GM10248 (cell line): ENCODE measurements at regions of chr2 and their contacts with region 1.

Region 1: GRCh38 chr2:70142590-70143313 is 48.1 kb downstream of the C2orf42 start:
- DNase-seq: peak; percentile 97
- CTCF ChIP-seq: peak; percentile 95

Region 2: GRCh38 chr2:70086838-70087701 is 55.7 kb before region 1 on chr2 and contains the start of gene PCBP1:
- CTCF ChIA-PET with region 1: interaction called, 10 read pairs
- POLR2A ChIA-PET with region 1: interaction called, 4 read pairs
- DNase-seq: peak; percentile 93
- CTCF ChIP-seq: no peak

Region 3: DNA sequence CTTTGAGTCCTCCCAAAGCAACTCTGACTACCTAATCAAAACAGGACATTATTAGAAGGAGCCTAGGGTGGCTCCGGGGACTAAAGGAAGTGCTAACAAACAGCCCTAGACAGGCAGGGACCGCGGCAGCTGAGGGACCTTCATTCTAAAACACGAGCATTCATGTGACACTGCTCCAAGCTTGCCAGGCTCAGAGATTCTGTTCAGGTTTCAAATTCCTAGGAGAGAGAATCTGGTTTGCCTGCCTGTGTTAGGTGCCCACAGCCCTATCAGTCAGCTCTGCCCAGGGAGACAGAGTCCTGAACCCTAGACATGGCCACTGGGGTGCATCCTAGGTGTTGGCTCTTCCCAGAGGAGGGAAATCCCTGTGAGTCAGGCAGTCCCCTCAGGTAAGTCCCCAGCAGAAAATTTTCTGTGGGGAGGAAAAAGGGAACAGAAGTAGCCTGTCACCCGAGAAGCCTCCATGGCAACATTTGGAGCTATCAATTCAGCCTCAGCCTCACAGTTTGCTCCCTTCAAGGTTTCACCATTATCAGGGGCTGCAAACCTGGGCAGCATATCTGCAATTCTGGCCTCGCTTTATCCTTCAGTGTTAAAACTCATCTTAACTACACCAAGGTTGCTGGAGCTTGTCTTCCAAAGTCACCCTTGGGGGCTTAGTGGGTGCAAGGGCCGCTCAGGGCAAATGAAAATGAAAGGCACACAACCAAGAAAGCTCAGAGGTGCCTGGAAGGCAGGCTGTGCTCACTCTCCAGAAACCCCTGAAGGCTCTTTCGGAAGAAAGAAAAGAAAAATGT is 26.9 kb before region 1 on chr2:
- CTCF ChIA-PET with region 1: interaction called, 22 read pairs
- POLR2A ChIA-PET with region 1: no interaction called
- DNase-seq: no peak
- CTCF ChIP-seq: no peak

Region 4: DNA sequence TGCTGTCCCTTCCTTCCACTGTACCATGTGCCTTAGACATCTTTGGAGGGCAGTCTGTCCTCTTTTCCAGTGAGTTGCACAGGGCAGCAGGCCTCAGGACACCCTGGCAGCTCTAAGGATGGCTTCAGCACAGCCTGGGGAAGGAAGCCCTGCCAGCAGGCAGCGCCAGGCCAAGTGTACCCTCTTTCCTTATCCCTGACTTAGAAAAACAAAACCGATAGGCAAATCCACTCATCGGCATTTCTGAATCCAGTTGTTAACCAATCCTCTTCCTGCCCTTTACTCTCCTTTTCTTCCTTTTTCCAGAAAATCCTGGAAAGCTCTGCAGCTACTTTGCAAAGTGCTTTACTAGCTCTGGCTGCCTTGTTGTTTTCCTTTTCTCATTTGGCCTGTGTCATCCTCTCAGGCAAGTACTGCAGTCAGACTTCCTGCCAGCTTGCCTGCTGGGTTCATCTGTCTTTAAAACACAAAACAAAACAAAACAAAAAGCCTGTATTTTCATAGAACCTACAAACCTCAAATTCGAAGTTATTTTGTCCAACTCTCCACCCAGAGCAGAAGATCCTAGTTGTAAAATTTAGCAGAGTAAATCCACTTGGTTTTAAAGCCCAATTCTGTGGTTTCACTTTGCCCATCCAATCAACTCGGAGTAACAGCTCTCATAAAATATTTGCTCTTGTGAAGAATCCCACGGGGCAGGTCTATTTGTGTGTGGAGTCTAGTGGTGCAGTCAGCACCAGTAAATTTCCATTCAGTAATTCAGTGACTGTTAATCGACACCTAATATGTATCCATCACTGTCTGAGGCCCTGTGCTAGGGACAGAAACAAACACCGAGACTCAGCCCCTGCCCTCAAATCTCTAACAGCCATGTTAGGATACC is 10.3 kb before region 1 on chr2:
- CTCF ChIA-PET with region 1: interaction called, 33 read pairs
- POLR2A ChIA-PET with region 1: no interaction called
- DNase-seq: peak; percentile 56
- CTCF ChIP-seq: no peak

Region 5: DNA sequence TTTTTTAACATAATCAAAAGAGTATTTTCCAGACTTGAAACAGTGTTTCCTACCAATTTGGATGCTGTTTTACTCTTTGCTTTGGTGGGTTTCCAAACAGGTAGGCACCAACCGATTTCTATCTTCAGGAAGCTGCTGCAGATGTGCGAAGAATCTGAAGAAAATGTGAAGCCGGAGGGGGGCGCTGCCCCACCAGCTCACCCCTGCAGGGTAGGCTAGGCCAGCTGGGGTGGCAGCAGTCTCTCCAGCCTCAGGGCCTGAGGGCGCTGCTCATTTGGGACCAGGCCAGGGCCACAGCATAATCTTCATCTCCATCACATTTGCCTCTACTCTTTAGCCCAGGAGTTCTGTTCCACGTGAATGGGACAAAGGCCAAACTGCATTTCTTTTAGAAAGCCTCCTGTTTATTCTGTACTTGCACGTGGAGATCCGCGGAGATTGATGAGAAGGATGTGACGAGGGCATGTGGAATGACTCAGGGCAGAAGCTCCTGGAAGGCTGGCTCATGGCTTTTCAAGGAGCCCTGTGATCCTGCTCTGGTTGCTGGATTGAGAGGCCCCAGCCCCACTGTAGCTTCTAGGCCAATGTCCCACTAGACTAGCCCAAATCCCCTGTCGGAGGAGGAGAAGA is 243.3 kb after region 1 on chr2:
- CTCF ChIA-PET with region 1: no interaction called
- POLR2A ChIA-PET with region 1: no interaction called
- DNase-seq: no peak
- CTCF ChIP-seq: no peak